HCT116 (cell line): ENCODE measurements at regions of chr18 and their contacts with region 1.

Region 1: GRCh38 chr18:46555724-46556123 is 101.3 kb downstream of the LOXHD1 start:
- DNase-seq: peak; percentile 32
- ATAC-seq: peak; percentile 100
- H3K4me3 ChIP-seq: no peak overlapping the region
- H3K27ac ChIP-seq: no peak overlapping the region
- H3K4me1 ChIP-seq: no peaks in the 10 kb centered on the region
- H3K27me3 ChIP-seq: no peaks in the 10 kb centered on the region; the same call in 1 of the 2 replicates
- CTCF ChIP-seq: peak; percentile 54 to 85 (median 80); a peak in 5 of 6 replicates
- POLR2A ChIP-seq: no peak
- RAD21 ChIP-seq: peak; percentile 67

Region 2: DNA sequence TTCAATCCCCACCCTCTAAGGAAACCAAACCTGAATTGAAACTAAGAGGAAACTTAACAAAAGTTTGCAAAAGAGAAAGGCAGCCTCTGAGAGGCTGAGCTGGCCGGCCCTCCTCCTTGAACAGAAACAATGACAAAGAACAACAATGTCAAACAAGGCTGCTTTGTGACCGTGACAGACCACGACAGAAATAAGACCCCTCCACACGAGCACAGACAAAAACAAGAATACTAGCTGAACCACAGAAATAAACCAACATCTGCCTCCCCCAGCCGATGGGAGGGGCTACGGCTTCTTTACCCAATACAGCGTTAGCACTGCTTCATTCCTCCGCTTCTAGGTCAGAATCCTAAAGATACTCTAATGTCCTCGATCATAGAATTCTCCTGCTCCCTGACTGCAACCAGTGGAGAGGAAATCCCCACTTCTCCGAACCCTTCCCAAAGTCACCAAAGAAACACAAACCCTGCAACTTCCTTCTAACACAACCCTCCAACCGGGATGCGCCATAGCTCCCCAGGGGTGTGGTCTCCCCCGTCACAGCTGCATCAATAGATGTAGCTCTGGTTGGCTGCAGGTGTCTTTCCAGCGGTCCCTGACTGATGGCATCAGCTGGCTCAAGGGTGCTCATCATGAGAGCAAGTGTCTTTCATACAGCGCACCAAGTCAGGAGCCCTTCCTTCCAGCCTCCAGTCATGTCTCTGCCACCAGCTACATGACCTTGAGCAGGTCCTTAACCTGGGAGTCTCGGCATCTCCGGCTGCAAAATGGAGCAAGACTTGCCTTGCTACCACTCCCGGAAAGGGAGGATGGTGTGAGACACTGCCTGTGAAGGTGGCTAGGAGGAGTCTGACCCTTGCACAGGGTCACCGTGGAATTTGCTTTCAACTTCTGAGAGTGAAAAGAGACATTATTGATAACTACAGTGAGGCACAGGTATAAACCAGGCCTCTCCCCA is 252.9 kb before region 1 on chr18:
- CTCF ChIA-PET with region 1: no interaction called
- POLR2A ChIA-PET with region 1: no interaction called
- RAD21 ChIA-PET with region 1: no interaction called
- intact Hi-C with region 1: no loop called
- DNase-seq: no peak
- ATAC-seq: no peak
- H3K4me3 ChIP-seq: no peak overlapping the region
- H3K27ac ChIP-seq: no peak overlapping the region
- H3K4me1 ChIP-seq: no peaks in the 10 kb centered on the region
- H3K27me3 ChIP-seq: peaks cover 8% of the 10 kb centered on the region; the same call in 1 of the 2 replicates
- CTCF ChIP-seq: no peak
- POLR2A ChIP-seq: no peak
- RAD21 ChIP-seq: no peak

Region 3: DNA sequence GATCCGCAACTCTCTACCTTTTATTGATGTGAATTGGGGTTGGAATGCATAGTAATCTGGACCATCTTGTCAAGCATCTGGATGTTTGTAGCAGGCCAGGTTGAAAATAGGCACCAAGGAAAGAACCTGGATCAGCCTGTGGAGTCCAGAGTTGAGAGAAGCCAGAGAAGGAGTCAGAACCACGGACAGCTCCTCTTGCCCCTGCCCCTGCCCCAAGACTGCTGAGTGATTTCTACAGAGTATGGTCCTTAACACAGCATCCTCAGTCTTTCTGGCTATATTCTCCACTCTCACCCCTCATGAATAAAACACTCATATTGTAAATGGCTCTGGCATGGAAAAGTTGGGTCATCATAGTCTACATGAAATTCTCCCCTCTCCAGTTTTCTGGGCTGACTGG is 53.3 kb before region 1 on chr18:
- CTCF ChIA-PET with region 1: no interaction called
- POLR2A ChIA-PET with region 1: no interaction called
- RAD21 ChIA-PET with region 1: no interaction called
- intact Hi-C with region 1: no loop called
- DNase-seq: no peak
- ATAC-seq: no peak
- H3K4me3 ChIP-seq: no peak overlapping the region
- H3K27ac ChIP-seq: no peak overlapping the region
- H3K4me1 ChIP-seq: no peaks in the 10 kb centered on the region
- H3K27me3 ChIP-seq: peaks cover 53% of the 10 kb centered on the region
- CTCF ChIP-seq: no peak
- POLR2A ChIP-seq: no peak
- RAD21 ChIP-seq: no peak

Region 4: GRCh38 chr18:46516555-46516954 is 39.2 kb before region 1 on chr18:
- CTCF ChIA-PET with region 1: no interaction called
- POLR2A ChIA-PET with region 1: no interaction called
- RAD21 ChIA-PET with region 1: no interaction called
- intact Hi-C with region 1: no loop called
- DNase-seq: no peak
- ATAC-seq: no peak
- H3K4me3 ChIP-seq: no peak overlapping the region
- H3K27ac ChIP-seq: no peak overlapping the region
- H3K4me1 ChIP-seq: no peaks in the 10 kb centered on the region
- H3K27me3 ChIP-seq: peaks cover 55% of the 10 kb centered on the region
- CTCF ChIP-seq: no peak
- POLR2A ChIP-seq: no peak
- RAD21 ChIP-seq: no peak

Region 5: GRCh38 chr18:46622999-46623398 is 67.3 kb after region 1 on chr18:
- CTCF ChIA-PET with region 1: interaction called, 14 read pairs
- POLR2A ChIA-PET with region 1: no interaction called
- RAD21 ChIA-PET with region 1: interaction called, 3 to 8 read pairs
- intact Hi-C with region 1: loop called (anchors 2 kb)
- DNase-seq: no peak
- ATAC-seq: peak; percentile 69
- H3K4me3 ChIP-seq: no peak overlapping the region
- H3K27ac ChIP-seq: no peak overlapping the region
- H3K4me1 ChIP-seq: no peaks in the 10 kb centered on the region
- H3K27me3 ChIP-seq: peaks cover 55% of the 10 kb centered on the region
- CTCF ChIP-seq: peak in 2 of 3 experiments; percentile 31 to 32; a peak in 3 of 6 replicates
- POLR2A ChIP-seq: no peak
- RAD21 ChIP-seq: peak; percentile 58